ENCODE measurements at regions of chr2 and their contacts with region 1.

Region 1: GRCh38 chr2:11778923-11779757 is 32.7 kb downstream of the LPIN1 start:
- DNase-seq: peak; percentile 82

Region 2: GRCh38 chr2:11631462-11631861 is 147.7 kb before region 1 on chr2:
- in situ Hi-C with region 1: no loop called
- DNase-seq: no peak

Region 3: DNA sequence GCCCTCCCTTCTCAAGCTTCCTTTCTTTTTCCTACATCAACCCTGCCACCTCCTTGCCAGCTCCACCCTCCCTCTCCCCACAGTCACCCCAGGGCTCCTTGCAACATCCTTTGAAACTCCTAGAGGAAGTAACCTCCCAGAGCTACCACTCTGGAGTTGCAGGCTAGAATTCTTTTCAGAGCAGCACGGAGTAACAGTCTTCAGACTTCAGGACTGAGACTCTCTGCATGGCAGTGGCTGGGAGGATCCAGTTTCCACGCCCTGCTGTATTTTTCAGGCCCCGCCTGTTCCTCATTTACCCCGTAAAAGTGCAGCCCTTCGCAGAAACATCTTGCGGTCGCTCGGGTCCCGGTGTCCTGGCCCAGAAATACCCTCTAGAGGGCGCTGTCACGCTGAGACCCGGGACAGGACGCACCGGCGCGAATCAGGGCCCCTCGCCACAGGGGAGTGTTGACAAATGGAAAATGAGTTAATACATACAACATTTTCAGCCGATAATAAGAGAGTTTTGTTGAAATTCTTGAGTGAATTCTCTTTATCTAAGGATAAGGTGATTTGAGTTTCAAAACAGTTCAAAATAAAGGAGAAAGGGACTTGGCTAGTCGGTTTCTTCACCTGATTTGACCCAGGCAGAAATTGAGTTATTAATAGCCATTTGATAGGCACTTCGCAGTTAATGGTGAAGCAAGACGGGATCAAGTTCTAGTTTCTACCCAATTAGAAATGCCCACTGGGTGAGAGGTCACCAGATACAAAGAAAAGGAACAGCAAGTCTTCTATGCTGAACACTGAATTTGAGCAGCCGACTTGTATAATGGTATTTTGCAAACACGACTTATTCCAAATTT is 90.7 kb before region 1 on chr2:
- in situ Hi-C with region 1: loop called (anchors 25 kb)
- DNase-seq: peak; percentile 61

Measured in G401 (cell line).